ENCODE measurements at regions of chr9 and their contacts with region 1.

Region 1: DNA sequence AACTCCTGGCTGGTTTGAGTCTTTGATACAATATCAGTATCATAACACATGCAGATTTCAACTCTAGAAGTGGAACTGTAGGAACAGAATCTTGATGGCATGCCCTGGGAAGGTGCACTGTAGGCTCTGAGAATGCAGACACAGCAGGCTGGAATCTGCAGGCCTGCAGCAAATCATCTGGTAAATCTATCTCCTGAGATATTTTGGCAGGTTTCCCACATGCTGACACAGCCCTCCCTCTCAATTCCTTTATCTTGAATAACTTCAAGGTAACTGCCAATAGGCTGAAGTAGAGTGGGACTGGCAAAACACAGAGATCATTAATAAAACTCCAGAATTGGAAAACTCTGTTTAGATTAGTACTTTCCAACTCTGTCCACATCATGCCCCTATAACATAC is 177.8 kb upstream of the PCSK5 start:
- DNase-seq: no peak
- ATAC-seq: peak in 7 of 8 donors; percentile 30 to 78 (median 59)
- H3K4me3 ChIP-seq: no peak overlapping the region
- H3K27ac ChIP-seq: peak overlapping the region in 5 of 10 donors; percentile 24 to 65 (median 60)
- H3K4me1 ChIP-seq: peaks cover 0 to 22% (median 4%) of the 10 kb centered on the region in 9 donors
- H3K27me3 ChIP-seq: no peaks in the 10 kb centered on the region
- CTCF ChIP-seq: no peak

Region 2: GRCh38 chr9:75615284-75615683 is 97.4 kb before region 1 on chr9:
- intact Hi-C with region 1: no loop called
- DNase-seq: no peak
- ATAC-seq: no peak
- H3K4me3 ChIP-seq: no peak overlapping the region
- H3K27ac ChIP-seq: no peak overlapping the region
- H3K4me1 ChIP-seq: peaks cover 0 to 18% (median 0%) of the 10 kb centered on the region in 9 donors
- H3K27me3 ChIP-seq: no peaks in the 10 kb centered on the region
- CTCF ChIP-seq: no peak

Region 3: GRCh38 chr9:75651709-75652108 is 61.0 kb before region 1 on chr9:
- intact Hi-C with region 1: loop called in 2 of 10 experiments (anchors 1 to 10 kb)
- DNase-seq: no peak
- ATAC-seq: peak in 5 of 8 donors; percentile 19 to 69 (median 34)
- H3K4me3 ChIP-seq: no peak overlapping the region
- H3K27ac ChIP-seq: peak overlapping the region in 1 of 10 donors; percentile 40
- H3K4me1 ChIP-seq: peaks cover 0 to 9% (median 0%) of the 10 kb centered on the region in 9 donors
- H3K27me3 ChIP-seq: no peaks in the 10 kb centered on the region
- CTCF ChIP-seq: no peak

Measured in heart right ventricle (tissue), 16 donors.